MCF 10A (cell line): ENCODE measurements at regions of chr9 and their contacts with region 1.

Region 1: DNA sequence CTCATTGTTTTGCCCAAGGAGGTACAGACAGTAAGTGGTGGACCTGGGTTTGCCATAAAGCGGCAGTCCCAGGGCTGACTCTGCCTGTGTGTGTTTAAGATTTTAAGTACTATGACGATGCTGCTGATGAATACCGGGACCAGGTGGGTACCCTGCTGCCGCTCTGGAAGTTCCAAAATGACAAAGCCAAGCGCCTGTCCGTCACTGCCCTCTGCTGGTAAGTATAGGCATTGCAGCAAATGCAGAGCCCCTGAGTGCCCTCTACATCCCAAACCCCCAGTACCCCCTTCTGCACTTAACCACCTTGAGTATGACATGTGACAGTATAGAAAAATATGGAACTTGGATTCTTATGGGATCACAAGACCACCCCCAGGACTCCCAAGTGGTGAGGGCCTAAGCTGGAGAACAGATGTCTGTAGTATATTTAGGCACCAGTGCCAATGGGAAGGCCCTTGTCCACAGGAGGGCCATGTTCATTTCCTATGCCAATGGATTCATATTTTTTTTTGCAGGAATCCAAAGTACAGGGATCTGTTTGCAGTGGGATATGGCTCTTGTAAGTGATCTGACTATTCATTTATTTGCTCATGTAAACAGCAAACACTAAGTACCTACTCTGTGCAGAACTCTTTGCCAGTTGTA is 22.0 kb downstream of the ENHO start:
- DNase-seq: peak; percentile 64
- H3K4me3 Mint-ChIP-seq: no peak overlapping the region
- H3K27ac Mint-ChIP-seq: no peak overlapping the region
- H3K4me1 Mint-ChIP-seq: peaks cover 7% of the 10 kb centered on the region
- H3K27me3 Mint-ChIP-seq: peaks cover 6% of the 10 kb centered on the region
- CTCF ChIP-seq: peak; percentile 94

Region 2: DNA sequence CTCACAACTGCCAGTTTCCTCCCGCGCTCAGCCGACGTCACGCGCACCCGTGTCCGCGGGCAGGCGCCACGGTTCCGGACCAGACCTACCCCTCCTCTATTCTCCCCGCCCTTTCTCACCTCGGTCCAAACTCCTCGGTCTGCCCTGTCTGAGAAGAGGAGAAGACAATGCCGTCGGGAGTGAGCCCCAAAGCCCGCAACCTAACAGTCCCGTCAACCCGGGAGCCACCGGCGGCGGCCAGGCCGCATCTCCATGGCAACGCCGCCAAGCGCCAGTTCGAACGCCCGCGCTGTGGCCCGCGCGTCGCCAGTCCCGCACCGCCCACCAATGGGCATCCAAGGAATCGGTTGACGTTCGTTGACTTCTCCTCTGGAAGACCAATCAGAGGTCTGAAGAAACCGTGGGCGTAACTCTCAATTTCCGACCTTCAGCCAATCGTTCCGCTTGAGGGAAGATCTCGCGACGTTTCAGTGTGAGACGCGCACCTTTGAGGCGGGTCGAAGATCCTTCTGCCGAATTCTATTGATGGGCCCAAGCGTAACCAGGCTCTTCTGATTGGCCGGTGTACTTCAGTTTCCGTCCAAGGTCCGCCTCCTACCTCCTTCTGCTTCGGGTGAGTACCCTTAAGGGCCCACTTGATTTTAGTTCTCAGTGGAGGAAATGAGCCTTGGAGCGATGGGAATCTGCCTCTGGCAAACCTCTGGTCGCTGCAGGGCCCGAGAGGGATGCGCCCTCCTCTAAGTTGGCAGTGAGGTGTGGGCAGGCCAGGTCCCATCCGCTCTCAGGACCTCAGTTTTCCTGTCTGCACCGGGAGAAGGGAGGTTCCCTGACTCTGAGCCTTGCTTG is 171.5 kb before region 1 on chr9 and contains the starts of genes KIF24 and NUDT2:
- CTCF ChIA-PET with region 1: interaction called, 8 read pairs
- POLR2A ChIA-PET with region 1: no interaction called
- intact Hi-C with region 1: loop called (anchors 1 kb)
- DNase-seq: peak; percentile 100
- H3K4me3 Mint-ChIP-seq: peak within 1 kb of the TSS; percentile 92
- H3K27ac Mint-ChIP-seq: peak within 1 kb of the TSS; percentile 99
- H3K4me1 Mint-ChIP-seq: peaks cover 42% of the 10 kb centered on the region
- H3K27me3 Mint-ChIP-seq: no peaks in the 10 kb centered on the region
- CTCF ChIP-seq: no peak
- total RNA-seq, gene KIF24: 3.3 and 3.5 TPM in 2 replicates
- total RNA-seq, gene NUDT2: 30.6 and 35.0 TPM in 2 replicates

Region 3: DNA sequence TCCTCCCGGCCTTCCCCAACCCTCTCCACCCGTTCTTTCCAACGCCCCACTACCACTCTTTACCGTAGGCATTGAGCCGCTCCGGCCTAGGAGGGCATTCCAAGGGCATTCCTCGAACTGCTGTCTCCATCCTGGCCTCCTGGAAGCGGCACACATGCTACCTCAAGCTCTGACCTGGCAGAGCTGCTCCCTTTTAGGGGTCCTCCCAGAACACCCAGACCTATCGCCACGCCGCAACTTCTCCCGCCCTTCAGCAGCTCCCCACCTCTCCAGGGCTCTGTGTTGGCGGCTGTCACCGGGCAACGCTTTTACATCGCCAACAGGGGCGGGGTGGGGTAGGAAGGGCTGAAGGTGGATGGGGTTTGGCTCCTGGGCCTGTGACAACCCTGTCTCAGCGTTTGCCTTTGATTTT is 119.4 kb before region 1 on chr9:
- CTCF ChIA-PET with region 1: no interaction called
- POLR2A ChIA-PET with region 1: no interaction called
- intact Hi-C with region 1: no loop called
- DNase-seq: no peak
- H3K4me3 Mint-ChIP-seq: no peak overlapping the region
- H3K27ac Mint-ChIP-seq: no peak overlapping the region
- H3K4me1 Mint-ChIP-seq: peaks cover 8% of the 10 kb centered on the region
- H3K27me3 Mint-ChIP-seq: no peaks in the 10 kb centered on the region
- CTCF ChIP-seq: no peak

Region 4: GRCh38 chr9:34430843-34431437 is 69.8 kb before region 1 on chr9:
- CTCF ChIA-PET with region 1: interaction called, 88 read pairs
- POLR2A ChIA-PET with region 1: no interaction called
- intact Hi-C with region 1: no loop called
- DNase-seq: peak; percentile 70
- H3K4me3 Mint-ChIP-seq: no peak overlapping the region
- H3K27ac Mint-ChIP-seq: no peak overlapping the region
- H3K4me1 Mint-ChIP-seq: no peaks in the 10 kb centered on the region
- H3K27me3 Mint-ChIP-seq: no peaks in the 10 kb centered on the region
- CTCF ChIP-seq: no peak

Region 5: GRCh38 chr9:34446468-34446891 is 54.3 kb before region 1 on chr9:
- CTCF ChIA-PET with region 1: interaction called, 88 read pairs
- POLR2A ChIA-PET with region 1: interaction called, 3 read pairs
- intact Hi-C with region 1: no loop called
- DNase-seq: no peak
- H3K4me3 Mint-ChIP-seq: no peak overlapping the region
- H3K27ac Mint-ChIP-seq: no peak overlapping the region
- H3K4me1 Mint-ChIP-seq: no peaks in the 10 kb centered on the region
- H3K27me3 Mint-ChIP-seq: no peaks in the 10 kb centered on the region
- CTCF ChIP-seq: no peak

Region 6: GRCh38 chr9:34458013-34458958 is 42.5 kb before region 1 on chr9 and contains the starts of genes DNAI1 and FAM219A:
- CTCF ChIA-PET with region 1: interaction called, 33 read pairs
- POLR2A ChIA-PET with region 1: interaction called, 3 read pairs
- intact Hi-C with region 1: no loop called
- DNase-seq: peak; percentile 98
- H3K4me3 Mint-ChIP-seq: peak within 1 kb of the TSS; percentile 98
- H3K27ac Mint-ChIP-seq: peak within 1 kb of the TSS; percentile 97
- H3K4me1 Mint-ChIP-seq: peaks cover 37% of the 10 kb centered on the region
- H3K27me3 Mint-ChIP-seq: no peaks in the 10 kb centered on the region
- CTCF ChIP-seq: no peak
- total RNA-seq, gene DNAI1: not detected in 2 replicates
- total RNA-seq, gene FAM219A: 19.3 and 20.3 TPM in 2 replicates

Region 7: GRCh38 chr9:34545497-34545896 is 44.8 kb after region 1 on chr9:
- CTCF ChIA-PET with region 1: no interaction called
- POLR2A ChIA-PET with region 1: no interaction called
- intact Hi-C with region 1: no loop called
- DNase-seq: no peak
- H3K4me3 Mint-ChIP-seq: no peak overlapping the region
- H3K27ac Mint-ChIP-seq: no peak overlapping the region
- H3K4me1 Mint-ChIP-seq: peaks cover 8% of the 10 kb centered on the region
- H3K27me3 Mint-ChIP-seq: peaks cover 16% of the 10 kb centered on the region
- CTCF ChIP-seq: no peak

Region 8: GRCh38 chr9:34591248-34591916 is 90.6 kb after region 1 on chr9:
- CTCF ChIA-PET with region 1: interaction called, 27 read pairs
- POLR2A ChIA-PET with region 1: no interaction called
- intact Hi-C with region 1: loop called (anchors 2 kb)
- DNase-seq: peak; percentile 68
- H3K4me3 Mint-ChIP-seq: no peak overlapping the region
- H3K27ac Mint-ChIP-seq: no peak overlapping the region
- H3K4me1 Mint-ChIP-seq: peaks cover 20% of the 10 kb centered on the region
- H3K27me3 Mint-ChIP-seq: peaks cover 59% of the 10 kb centered on the region
- CTCF ChIP-seq: peak; percentile 94

Region 9: DNA sequence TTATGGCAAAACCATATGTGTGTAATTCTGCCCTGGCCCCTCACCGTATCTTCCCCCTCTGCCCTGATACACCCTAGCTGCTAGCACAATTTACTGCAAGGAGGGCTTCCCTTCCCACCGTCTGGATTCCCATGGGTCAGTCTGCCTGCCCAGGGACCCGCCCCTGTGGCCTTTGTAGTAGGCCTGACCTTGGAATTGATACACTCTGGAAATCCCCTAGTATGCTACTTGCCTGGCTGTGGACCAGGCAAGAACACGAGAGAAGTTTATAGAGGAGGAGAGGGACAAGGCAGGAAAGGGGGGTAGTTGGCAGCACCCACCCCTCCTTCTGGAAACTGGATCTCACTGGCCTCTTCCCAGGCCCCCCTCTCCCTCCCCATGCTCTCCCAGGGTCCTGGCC is 325.0 kb after region 1 on chr9:
- CTCF ChIA-PET with region 1: no interaction called
- POLR2A ChIA-PET with region 1: no interaction called
- intact Hi-C with region 1: no loop called
- DNase-seq: no peak
- H3K4me3 Mint-ChIP-seq: no peak overlapping the region
- H3K27ac Mint-ChIP-seq: no peak overlapping the region
- H3K4me1 Mint-ChIP-seq: no peaks in the 10 kb centered on the region
- H3K27me3 Mint-ChIP-seq: peaks cover 14% of the 10 kb centered on the region
- CTCF ChIP-seq: no peak